ENCODE measurements at regions of chr2 and their contacts with region 1.

Region 1: DNA sequence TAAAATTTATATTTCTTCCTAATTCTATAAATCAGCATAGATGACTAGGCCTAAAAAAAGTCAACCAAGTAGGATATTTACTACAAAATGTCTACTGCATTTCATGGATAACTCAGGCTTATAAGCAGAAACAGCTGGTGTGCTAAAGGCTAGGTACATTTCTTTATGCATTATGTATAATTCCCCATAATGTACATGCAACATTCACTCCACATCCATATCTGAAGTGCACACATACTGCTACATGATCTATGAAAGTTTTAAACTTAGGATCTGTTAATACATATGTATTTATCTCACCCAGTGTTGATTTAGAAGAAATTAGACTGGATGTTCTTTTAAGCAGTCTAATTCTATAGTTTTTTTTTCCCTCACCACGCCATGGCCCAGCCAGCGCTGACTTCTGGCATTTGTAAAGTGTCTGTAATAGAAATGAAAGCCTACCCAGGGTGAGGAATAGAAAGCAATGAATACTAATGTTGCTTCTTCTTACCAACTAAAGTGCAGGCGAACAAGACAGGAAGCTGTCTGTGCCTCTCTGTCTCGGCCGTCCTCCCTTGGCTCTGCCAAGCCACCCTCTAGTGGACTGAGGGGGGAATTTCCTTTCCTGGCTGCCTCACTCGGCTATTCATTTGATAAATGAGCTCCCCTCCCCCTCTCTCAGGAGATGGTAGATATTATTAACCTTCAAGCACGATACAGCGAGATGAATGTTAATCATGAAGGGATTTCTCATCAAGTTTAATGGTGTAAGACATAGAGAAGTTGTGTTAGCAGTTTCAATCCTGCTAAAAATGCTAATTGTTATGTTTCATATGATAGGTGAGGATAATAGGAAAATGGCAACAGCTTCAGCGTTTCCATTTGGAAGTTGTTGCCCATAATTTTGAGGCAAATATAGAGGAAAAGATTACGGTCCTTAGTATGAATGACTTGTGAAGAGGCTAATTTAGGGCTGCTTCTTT is 384.5 kb downstream of the MTX2 start:
- DNase-seq: peak; percentile 19 to 77 (median 49)

Region 2: GRCh38 chr2:176518823-176519222 is 134.9 kb before region 1 on chr2:
- intact Hi-C with region 1: no loop called
- DNase-seq: peak in 1 of 42 donors; percentile 37

Region 3: GRCh38 chr2:176565641-176566323 is 88.0 kb before region 1 on chr2:
- intact Hi-C with region 1: no loop called
- DNase-seq: peak in 27 of 42 donors; percentile 5 to 66 (median 24)

Region 4: GRCh38 chr2:176814306-176815052 is 160.7 kb after region 1 on chr2:
- intact Hi-C with region 1: loop called (anchors 10 kb)
- DNase-seq: peak in 2 of 42 donors; percentile 7 to 13